ENCODE measurements at regions of chr12 and their contacts with region 1.

Region 1: DNA sequence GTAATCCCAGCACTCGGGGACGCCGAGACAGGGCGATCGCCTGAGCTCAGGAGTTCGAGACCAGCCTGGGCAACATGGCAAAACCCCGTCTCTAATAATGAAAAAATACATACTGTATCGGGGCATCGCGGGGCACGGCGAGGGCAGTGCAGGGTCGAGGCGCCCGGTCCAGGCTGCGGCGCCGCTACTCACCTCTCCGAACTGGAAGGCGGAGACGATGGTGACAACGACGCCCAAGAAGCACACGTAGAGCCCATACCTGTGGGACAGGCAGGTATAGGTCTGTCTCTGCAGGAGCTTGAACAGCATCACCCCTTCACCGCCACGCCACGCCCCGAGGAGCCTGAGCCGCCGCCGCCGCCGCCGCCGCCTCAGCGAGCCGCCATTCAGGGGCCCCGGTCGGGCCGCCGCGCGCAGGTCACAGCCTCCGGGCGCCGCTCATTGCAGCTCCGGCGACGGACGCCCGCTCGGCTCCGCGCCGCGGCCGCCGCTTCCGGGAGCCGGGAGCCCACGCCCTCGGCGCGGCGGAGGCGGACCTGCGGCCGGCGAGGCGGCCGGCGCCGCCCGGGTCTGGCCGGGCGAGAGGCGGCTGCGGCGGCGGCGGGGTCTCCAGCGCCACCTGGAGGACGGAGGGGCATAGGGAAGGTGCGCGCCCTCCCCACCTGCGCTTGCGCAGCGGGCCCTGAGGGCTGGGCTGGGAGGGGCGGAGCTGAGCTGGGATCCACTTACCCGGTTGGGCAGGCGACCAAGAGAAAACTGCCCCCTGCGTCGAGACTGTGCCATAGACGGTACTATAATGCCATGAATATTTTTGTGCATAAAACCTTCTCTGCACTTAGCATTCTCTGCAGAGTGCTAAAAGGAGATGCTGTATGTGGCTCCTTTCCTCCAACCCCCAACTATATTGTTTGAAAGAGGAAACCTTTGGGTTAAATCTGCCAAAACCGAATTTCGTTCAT is at the start of gene GNPTAB:
- DNase-seq: peak; percentile 82
- H3K4me3 ChIP-seq: peak within 1 kb of the TSS; percentile 96
- H3K27ac ChIP-seq: no peak within 1 kb of the TSS
- H3K27me3 ChIP-seq: no peaks in the 10 kb centered on the region
- CTCF ChIP-seq: peak; percentile 67
- polyA plus RNA-seq, gene GNPTAB: 29.0 and 34.3 TPM in 2 replicates

Region 2: DNA sequence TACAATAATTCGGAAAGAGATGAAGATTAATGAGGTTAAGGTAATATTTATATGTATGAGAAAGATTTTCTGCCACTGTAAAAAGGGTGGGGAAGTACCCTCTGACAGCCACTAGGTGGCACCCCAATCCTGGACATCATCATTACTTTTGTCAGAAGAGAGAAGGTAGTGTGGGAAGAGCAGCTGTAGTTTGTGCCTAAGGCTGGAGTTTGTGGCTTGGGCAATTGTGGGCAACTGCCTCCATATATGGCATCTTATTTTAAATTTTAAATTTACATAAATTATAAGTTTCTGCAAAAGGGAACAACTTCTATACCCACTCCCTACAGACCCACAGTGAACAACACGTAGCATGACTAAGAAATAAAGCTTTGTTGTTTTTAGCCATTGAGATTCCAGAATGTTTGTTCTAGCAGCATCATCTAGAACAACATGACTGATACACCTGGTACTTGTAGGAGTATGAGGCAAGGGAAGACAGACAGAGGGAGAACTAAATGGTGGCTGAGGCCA is 56.9 kb before region 1 on chr12:
- CTCF ChIA-PET with region 1: interaction called, 124 read pairs
- POLR2A ChIA-PET with region 1: interaction called, 6 read pairs
- DNase-seq: peak; percentile 34
- H3K4me3 ChIP-seq: no peak overlapping the region
- H3K27ac ChIP-seq: no peak overlapping the region
- H3K27me3 ChIP-seq: no peaks in the 10 kb centered on the region
- CTCF ChIP-seq: peak; percentile 86

Region 3: GRCh38 chr12:101792051-101792931 is 38.4 kb before region 1 on chr12:
- CTCF ChIA-PET with region 1: interaction called, 14 read pairs
- POLR2A ChIA-PET with region 1: no interaction called
- DNase-seq: no peak
- H3K4me3 ChIP-seq: no peak overlapping the region
- H3K27ac ChIP-seq: no peak overlapping the region
- H3K27me3 ChIP-seq: no peaks in the 10 kb centered on the region
- CTCF ChIP-seq: peak; percentile 41

Region 4: GRCh38 chr12:101813117-101813516 is 17.5 kb before region 1 on chr12:
- CTCF ChIA-PET with region 1: interaction called, 45 read pairs
- POLR2A ChIA-PET with region 1: no interaction called
- DNase-seq: no peak
- H3K4me3 ChIP-seq: no peak overlapping the region
- H3K27ac ChIP-seq: no peak overlapping the region
- H3K27me3 ChIP-seq: no peaks in the 10 kb centered on the region
- CTCF ChIP-seq: no peak

Region 5: DNA sequence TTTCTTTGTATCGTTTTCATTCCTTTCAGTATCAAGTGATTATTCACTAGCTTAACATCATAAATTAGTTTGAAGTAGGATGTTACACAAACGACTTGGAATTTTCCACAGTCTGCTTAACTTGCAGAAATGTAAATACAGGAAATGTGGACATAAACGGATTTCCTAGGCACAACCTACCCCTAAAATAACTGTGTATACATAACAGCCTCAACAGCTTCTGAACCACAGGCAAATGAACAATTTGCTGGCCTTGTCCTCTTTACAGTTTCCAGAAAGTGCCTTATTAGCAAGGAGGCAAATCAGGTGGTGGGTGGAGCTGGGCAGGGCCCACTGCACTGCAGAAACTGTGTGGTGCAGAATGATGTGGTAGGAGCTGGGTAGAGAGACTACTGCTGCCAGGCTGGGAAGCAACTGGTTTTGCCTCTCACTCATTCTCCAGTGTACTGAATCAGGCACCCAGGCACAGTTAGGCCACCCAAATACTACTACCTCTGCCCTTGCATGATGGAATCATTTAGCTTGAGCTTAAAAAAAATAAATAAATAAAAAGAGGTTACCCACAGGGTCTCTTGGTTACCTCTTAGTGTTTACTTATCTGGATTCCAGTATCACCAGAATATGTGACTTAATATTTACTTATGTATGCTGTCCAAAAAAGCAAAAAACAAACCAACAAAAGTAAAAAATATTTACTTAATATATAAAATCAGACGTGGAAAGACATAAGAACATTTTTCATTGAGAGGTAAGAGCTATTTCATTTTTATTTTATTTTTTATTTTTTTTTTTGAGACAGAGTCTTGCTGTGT is 61.0 kb after region 1 on chr12:
- CTCF ChIA-PET with region 1: interaction called, 11 read pairs
- POLR2A ChIA-PET with region 1: no interaction called
- DNase-seq: peak; percentile 75
- H3K4me3 ChIP-seq: peak overlapping the region; percentile 15
- H3K27ac ChIP-seq: peak overlapping the region; percentile 90
- H3K27me3 ChIP-seq: no peaks in the 10 kb centered on the region
- CTCF ChIP-seq: no peak